Right ventricle myocardium inferior (tissue), 1 donor: ENCODE measurements at regions of chr12 and their contacts with region 1.

Region 1: DNA sequence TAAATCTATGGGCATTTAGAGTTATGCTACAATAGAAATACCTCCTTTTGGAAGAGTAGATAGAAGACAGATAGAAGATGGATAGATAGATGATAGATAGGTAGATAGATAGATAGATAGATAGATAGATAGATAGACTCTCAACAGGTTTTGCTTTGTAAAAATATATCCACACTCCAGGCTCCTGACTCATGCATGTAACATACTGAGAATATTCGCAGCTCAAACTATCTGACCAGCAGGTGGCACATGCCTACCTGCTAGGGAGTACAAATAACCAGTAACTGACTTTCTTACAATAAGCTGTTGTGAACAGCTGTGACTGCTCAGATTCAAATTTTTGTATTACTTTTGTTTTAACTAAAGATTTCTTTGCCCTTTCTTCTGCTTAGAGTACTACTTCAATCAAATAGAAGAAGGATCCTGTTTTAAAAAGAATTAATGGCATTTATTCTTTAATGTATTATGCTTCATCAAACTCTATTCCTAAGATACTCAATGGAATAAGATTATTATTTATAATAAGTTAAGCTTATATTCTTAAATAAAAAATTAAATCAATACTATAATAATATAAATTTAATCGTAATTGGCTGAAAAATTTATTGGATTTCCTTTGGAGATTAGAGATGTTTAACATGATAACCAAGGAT is 15.8 kb upstream of the CPNE8 start:
- DNase-seq: no peak
- ATAC-seq: peak; percentile 76

Region 2: DNA sequence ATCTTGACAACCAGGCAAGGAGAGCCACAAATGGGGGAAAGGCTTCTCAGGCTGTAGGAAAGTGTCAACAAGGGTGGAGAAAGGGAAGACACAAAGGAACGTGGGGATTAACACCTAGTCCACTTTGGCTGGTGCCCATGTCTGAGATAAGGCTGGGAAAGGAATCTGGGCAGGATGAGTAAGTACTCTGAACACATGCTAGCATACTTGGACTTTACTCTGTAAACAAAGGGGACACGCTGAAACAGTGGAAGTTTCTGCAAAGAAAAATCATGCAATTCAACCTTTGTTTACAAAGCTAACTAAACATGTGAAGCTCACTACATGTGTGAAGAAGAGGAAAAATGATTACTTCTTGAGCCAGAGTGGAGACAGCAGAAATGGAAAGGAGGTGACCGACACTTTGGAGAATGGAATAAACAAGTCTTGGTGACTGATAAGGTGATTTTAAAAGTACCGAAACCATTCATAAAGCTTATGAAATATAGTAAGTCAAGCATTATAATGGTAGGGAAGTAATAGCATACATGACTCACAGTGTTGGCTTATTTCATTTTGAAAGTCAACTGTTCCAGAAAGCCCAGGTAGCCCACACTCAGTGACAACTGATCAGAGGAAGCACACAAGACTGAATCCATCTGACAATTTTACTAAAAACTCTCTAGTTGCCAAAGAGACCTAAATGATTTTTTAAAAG is 28.9 kb before region 1 on chr12:
- intact Hi-C with region 1: no loop called
- DNase-seq: no peak
- ATAC-seq: peak; percentile 52

Region 3: DNA sequence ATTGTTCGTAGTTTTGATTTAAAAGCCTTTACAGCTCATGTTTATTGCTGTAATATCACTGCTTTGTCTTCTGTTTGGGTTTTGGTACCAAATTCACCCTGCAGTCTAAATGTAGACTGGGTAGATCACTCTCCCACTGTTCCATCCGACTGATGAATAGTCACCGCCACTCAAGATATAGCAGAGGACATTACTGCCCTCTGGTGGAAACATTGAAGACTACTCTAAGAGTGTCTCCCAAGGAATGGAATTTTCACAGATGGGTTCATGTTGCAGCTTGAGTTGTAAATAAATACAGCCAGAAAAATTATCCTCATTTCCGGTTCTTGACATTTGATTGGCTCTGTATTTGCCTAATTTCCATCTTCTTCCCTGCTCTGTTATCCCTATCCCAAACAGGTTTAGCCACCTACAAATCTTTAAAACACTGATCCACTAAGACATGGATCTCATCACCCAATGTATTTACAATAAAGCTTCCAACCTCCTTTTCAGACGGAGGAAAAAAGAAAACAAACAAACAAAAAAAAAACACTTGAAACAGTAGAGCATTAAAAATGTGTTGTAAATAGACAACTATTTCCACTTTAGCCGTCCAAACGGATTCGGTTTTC is 182.5 kb after region 1 on chr12:
- intact Hi-C with region 1: loop called (anchors 1 kb)
- DNase-seq: no peak
- ATAC-seq: peak; percentile 87

Region 4: DNA sequence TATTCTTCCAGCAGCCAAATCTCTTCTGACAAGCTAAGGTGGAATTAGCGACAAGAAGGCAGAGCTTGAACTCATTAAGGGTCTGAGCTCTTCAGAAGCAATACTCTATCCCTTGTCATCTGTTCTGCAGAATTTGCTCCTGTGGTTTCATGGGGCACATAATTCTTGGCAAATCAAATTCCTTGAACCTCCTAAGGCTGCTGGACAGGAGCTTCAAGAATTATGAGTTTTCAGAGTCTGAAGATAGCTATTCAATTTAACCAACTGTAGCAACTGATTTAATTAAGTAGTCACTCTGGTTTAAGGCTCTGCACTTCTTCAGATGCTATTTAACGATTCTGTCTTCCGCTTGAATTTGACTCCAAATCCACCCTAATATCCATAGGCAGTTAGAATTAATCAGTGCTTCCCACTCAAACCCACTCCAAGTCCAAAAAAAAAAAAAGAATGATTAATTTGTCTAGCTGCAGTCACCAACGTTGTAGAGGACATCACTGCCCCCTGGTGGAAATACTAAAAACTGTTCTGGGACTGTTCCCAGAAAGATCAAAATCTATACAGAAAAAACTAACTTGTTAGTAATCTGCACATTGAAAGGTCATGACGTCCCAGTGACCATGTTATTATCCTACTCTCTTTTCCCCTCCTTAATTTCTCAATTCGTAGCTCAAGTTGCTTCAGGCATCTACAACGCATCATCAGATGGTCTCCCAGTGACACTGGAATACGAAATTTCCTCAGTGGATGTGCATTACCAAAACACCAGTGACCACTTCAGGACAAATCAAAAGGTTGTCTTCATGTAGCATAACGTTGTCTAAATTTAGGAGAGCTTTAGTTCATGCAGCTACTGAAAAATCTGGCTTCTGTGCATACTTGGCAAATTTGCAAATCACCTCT is 352.0 kb after region 1 on chr12:
- intact Hi-C with region 1: loop called (anchors 10 kb)
- DNase-seq: no peak
- ATAC-seq: no peak